ENCODE measurements at regions of chr4 and their contacts with region 1.

Region 1: DNA sequence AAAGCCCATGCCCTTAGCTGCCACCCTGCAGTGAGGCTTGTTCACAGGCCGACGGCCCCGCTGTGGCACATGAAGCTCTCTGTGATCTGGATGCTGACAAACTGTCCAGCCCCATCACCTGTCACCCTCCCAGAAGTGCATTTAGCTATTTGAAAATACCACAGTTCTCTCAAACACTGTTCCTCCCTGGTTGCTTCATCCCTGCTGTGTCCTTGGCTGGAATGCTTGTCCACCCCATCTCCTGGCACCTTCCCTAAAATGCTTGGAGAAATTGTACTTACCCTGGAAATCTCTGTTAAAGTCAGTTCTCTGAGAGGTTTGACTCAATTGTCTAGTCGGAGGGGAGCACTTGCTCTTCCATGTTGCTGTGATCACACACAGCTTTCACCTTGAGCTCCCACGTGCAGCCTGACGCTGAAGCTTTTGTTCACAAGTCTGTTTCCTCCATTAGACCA is 10.1 kb downstream of the SYNPO2 start:
- DNase-seq: no peak
- H3K4me3 ChIP-seq: no peak overlapping the region
- H3K27ac ChIP-seq: no peak overlapping the region
- H3K4me1 ChIP-seq: no peaks in the 10 kb centered on the region
- H3K27me3 ChIP-seq: no peaks in the 10 kb centered on the region
- CTCF ChIP-seq: no peak

Region 2: DNA sequence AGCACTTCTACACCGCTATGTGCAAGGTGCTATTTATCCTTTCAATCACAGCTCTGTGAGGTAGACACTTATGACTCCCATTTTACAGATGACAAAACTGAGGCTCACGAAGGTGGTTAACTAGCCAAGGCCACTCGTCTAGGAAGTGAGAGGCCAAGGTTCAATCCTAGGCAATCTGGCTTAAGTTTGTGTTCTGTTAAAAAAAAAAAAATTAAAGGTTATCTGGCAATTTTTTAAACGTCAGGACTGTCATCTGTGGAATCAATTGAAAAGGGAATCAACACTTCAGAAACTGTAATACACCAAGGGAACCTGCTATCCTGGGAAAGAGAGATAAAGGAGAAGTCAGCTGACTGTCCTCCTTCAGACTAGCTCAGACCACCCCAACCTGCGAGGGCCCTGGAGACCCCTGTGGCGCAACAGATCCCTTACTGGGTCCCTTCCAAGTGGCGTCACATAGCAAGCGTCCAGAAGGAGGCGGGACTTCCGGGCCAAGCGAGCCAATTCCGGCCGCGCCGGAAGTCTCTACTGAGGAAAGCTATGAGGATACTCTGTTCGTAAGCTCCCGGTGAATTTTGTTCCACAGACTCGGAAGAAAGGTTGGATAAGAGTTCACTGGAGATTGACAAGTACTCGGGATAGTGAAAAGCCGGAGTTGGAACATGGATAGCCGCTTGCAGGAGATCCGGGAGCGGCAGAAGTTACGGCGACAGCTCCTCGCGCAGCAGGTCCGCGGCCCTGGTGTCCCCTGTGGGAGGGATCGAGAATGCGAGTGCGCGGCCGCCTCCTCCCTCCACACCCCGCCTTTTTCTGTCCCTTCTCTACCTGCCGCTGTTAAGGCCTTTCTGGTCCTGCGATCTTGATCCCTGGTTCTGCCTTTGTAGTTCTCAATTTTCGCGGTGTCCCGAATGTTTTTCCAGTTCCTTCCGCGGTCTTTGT is 213.6 kb before region 1 on chr4 and contains the start of gene METTL14:
- CTCF ChIA-PET with region 1: no interaction called
- dilution Hi-C with region 1: no loop called
- in situ Hi-C with region 1: no loop called
- intact Hi-C with region 1: loop called (anchors 10 kb)
- DNase-seq: peak; percentile 88
- H3K4me3 ChIP-seq: peak within 1 kb of the TSS; percentile 66 to 88 (median 87)
- H3K27ac ChIP-seq: peak within 1 kb of the TSS; percentile 73
- H3K4me1 ChIP-seq: peaks cover 10% of the 10 kb centered on the region
- H3K27me3 ChIP-seq: no peaks in the 10 kb centered on the region
- CTCF ChIP-seq: peak in 1 of 2 donors; percentile 17
- total RNA-seq, gene METTL14: 22.0 to 36.5 TPM

Region 3: DNA sequence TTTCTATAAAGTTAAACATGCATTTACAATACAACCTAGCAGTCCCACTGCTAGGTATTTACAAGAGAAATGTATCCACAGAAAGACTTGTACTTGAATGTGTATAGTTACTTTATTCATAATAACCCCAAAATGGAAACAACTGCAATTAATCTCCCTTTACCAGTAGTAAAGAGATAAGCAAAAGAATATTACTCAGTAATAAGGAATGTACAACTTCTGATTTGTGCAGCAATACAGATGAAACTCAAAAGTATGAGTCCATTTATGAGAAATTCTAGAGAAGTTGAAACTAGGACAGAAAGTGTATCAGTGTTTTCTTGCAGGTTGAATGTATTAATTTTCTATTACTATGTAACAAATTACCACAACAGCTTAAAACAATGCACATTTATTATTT is 329.0 kb after region 1 on chr4:
- CTCF ChIA-PET with region 1: no interaction called
- dilution Hi-C with region 1: no loop called
- in situ Hi-C with region 1: no loop called
- intact Hi-C with region 1: no loop called
- DNase-seq: no peak
- H3K4me3 ChIP-seq: no peak overlapping the region
- H3K27ac ChIP-seq: no peak overlapping the region
- H3K4me1 ChIP-seq: no peaks in the 10 kb centered on the region
- H3K27me3 ChIP-seq: no peaks in the 10 kb centered on the region
- CTCF ChIP-seq: no peak

Measured in mammary epithelial cell (primary cell).